Endothelial cell of umbilical vein (primary cell): ENCODE measurements at regions of chr10 and their contacts with region 1.

Region 1: DNA sequence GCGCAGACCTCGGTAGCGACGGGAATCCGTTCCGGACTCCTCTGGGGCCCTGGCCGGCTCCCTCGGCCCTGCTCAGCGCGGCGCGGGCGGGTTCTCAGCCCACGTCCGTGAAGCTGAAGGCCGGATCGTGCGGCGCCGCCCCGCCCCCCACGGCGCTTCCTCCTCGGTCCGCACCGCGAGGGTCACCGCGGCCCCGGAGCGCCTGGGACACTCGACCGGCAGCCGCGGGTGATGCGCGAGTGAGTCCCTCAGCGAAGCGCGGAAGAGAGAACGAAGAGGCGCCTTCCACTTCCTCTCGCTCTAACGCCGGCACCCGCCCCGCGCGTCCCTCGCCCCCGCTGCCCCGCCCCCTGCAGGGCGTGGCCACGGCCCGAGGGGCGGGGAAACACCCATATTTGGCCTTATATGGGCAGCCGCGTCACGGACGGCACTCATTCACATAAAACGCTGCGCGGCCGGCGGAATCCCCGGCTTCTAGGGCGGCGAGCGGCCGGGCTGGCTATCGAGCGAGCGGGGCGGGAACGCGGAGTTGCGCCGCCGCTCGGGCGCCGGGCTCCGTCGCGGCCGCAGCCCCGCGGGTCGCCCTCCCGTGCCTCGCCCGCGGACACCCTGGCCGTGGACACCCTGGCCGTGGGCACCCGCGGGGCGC is at the start of gene DUSP5:
- DNase-seq: peak; percentile 96
- H3K4me3 ChIP-seq: peak within 1 kb of the TSS; percentile 58 to 81 (median 77)
- H3K27ac ChIP-seq: peak within 1 kb of the TSS; percentile 94
- H3K4me1 ChIP-seq: peaks cover 48% of the 10 kb centered on the region
- H3K27me3 ChIP-seq: no peaks in the 10 kb centered on the region
- CTCF ChIP-seq: no peak
- POLR2A ChIP-seq: peak; percentile 93
- total RNA-seq, gene DUSP5: 12.2 and 12.6 TPM in 2 replicates

Region 2: DNA sequence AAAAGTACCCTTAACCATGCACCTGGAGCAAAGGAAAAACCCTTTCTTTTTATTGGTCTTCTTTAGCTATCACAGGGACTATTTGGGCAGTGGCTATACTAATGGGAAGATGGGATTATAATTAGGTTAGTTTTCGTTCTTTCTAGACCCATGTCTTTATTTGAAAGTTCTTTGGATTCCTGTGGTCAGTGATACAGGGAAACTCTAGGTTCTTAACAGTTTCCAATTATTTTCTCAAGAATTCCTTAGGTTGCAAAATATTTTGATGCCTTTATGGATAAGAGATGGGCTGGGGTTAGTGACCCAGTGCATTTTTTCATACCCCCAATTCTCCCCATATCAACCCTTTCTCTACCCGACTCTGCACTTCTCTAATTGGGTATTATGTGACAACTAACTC is 440.7 kb before region 1 on chr10:
- CTCF ChIA-PET with region 1: no interaction called
- POLR2A ChIA-PET with region 1: no interaction called
- dilution Hi-C with region 1: no loop called
- intact Hi-C with region 1: no loop called
- DNase-seq: no peak
- H3K4me3 ChIP-seq: no peak overlapping the region
- H3K27ac ChIP-seq: no peak overlapping the region
- H3K4me1 ChIP-seq: peaks cover 14% of the 10 kb centered on the region
- H3K27me3 ChIP-seq: no peaks in the 10 kb centered on the region
- CTCF ChIP-seq: no peak
- POLR2A ChIP-seq: no peak

Region 3: GRCh38 chr10:110311357-110311949 is 186.1 kb before region 1 on chr10:
- CTCF ChIA-PET with region 1: interaction called, 32 read pairs
- POLR2A ChIA-PET with region 1: interaction called, 5 read pairs
- dilution Hi-C with region 1: no loop called
- intact Hi-C with region 1: loop called (anchors 1 kb)
- DNase-seq: peak; percentile 65
- H3K4me3 ChIP-seq: peak overlapping the region in 1 of 3 experiments; percentile 33
- H3K27ac ChIP-seq: peak overlapping the region; percentile 72
- H3K4me1 ChIP-seq: peaks cover 47% of the 10 kb centered on the region
- H3K27me3 ChIP-seq: no peaks in the 10 kb centered on the region
- CTCF ChIP-seq: peak; percentile 54 to 55
- POLR2A ChIP-seq: no peak

Region 4: DNA sequence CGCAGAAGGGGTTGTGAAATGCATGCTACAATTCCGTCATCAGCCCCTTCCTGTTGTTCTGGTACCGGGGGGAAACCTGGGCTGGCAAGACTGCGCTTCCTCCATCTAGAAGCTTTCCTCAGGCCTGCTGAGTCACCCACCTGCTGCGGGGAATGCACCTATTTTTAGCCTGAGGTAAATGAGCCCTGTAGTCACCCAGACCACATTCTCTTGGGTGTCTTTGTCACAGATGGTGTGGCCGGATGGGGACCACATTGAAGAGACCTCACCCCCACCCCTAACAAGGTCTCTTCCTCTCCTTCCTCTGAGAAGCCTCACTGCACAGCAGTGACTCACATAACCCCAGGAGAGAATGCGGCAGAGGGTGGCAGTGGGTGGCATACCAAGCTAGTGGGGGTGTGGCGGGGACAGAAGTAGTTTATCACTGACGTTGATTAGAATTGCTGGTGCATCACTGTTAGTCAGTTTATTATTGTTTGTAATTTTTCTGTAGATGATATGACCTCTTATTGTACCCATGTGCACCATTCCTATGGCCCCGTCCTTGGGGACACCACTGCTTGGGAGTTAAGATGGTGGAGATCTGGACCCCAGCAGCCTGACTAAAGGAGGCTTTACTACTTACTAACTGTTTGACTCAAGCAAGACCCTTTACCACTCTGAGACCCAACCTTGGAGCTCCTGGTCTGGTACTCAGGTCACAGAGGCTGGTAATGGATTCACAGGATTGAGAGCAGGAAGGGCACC is 82.8 kb before region 1 on chr10:
- CTCF ChIA-PET with region 1: interaction called, 6 read pairs
- POLR2A ChIA-PET with region 1: interaction called, 4 read pairs
- dilution Hi-C with region 1: no loop called
- intact Hi-C with region 1: loop called (anchors 5 kb)
- DNase-seq: no peak
- H3K4me3 ChIP-seq: no peak overlapping the region
- H3K27ac ChIP-seq: peak overlapping the region; percentile 8
- H3K4me1 ChIP-seq: peaks cover 39% of the 10 kb centered on the region
- H3K27me3 ChIP-seq: no peaks in the 10 kb centered on the region
- CTCF ChIP-seq: no peak
- POLR2A ChIP-seq: no peak

Region 5: DNA sequence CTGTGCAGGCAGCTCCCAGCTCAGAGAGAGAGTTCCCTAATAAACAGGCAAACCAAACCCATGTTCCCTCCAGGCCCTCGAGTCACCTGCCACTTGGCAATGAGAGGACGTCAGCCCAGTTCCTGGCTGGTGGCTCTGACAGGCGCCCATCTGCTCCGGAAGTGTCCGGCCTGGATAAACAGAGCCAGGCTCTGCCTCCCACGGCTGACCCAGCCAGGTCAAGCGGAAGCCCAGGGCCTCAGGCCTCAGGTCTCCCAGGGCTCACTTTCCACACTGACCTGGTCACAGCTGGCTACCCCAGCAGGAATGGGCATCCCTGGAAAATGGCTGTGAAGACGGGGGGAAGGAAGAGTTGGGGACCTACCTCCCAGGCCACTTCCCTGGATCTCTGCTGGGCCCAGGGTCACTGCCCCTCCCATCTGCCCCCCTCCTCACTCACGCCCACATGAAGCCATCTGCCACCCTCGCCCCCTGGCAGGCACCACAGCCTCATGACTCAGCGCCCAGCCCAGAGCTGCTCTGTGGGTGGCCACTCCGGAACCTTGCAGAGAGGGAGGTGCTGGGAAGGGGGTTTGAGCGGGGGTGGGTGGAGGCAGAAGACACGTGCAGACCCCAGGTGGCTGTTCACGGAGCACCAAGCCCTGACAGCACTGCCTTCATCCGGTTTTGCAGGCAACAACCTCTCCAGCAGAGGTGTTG is 37.3 kb before region 1 on chr10:
- CTCF ChIA-PET with region 1: interaction called, 3 read pairs
- POLR2A ChIA-PET with region 1: no interaction called
- dilution Hi-C with region 1: no loop called
- intact Hi-C with region 1: loop called (anchors 2 kb)
- DNase-seq: peak; percentile 55
- H3K4me3 ChIP-seq: no peak overlapping the region
- H3K27ac ChIP-seq: peak overlapping the region; percentile 66
- H3K4me1 ChIP-seq: peaks cover 29% of the 10 kb centered on the region
- H3K27me3 ChIP-seq: no peaks in the 10 kb centered on the region
- CTCF ChIP-seq: no peak
- POLR2A ChIP-seq: no peak

Region 6: GRCh38 chr10:110481934-110482333 is 15.6 kb before region 1 on chr10:
- CTCF ChIA-PET with region 1: no interaction called
- POLR2A ChIA-PET with region 1: no interaction called
- dilution Hi-C with region 1: no loop called
- intact Hi-C with region 1: no loop called
- DNase-seq: no peak
- H3K4me3 ChIP-seq: no peak overlapping the region
- H3K27ac ChIP-seq: no peak overlapping the region
- H3K4me1 ChIP-seq: peaks cover 6% of the 10 kb centered on the region
- H3K27me3 ChIP-seq: no peaks in the 10 kb centered on the region
- CTCF ChIP-seq: no peak
- POLR2A ChIP-seq: no peak

Region 7: GRCh38 chr10:110528224-110528997 is 30.8 kb after region 1 on chr10:
- CTCF ChIA-PET with region 1: interaction called, 6 read pairs
- POLR2A ChIA-PET with region 1: no interaction called
- dilution Hi-C with region 1: no loop called
- intact Hi-C with region 1: loop called (anchors 1 kb)
- DNase-seq: no peak
- H3K4me3 ChIP-seq: no peak overlapping the region
- H3K27ac ChIP-seq: peak overlapping the region; percentile 90
- H3K4me1 ChIP-seq: peaks cover 55% of the 10 kb centered on the region
- H3K27me3 ChIP-seq: no peaks in the 10 kb centered on the region
- CTCF ChIP-seq: no peak
- POLR2A ChIP-seq: no peak

Region 8: GRCh38 chr10:110794808-110795207 is 297.2 kb after region 1 on chr10:
- CTCF ChIA-PET with region 1: no interaction called
- POLR2A ChIA-PET with region 1: no interaction called
- dilution Hi-C with region 1: no loop called
- intact Hi-C with region 1: no loop called
- DNase-seq: no peak
- H3K4me3 ChIP-seq: no peak overlapping the region
- H3K27ac ChIP-seq: no peak overlapping the region
- H3K4me1 ChIP-seq: no peaks in the 10 kb centered on the region
- H3K27me3 ChIP-seq: peaks cover 12 to 14% of the 10 kb centered on the region in 2 experiments
- CTCF ChIP-seq: no peak
- POLR2A ChIP-seq: no peak

Region 9: DNA sequence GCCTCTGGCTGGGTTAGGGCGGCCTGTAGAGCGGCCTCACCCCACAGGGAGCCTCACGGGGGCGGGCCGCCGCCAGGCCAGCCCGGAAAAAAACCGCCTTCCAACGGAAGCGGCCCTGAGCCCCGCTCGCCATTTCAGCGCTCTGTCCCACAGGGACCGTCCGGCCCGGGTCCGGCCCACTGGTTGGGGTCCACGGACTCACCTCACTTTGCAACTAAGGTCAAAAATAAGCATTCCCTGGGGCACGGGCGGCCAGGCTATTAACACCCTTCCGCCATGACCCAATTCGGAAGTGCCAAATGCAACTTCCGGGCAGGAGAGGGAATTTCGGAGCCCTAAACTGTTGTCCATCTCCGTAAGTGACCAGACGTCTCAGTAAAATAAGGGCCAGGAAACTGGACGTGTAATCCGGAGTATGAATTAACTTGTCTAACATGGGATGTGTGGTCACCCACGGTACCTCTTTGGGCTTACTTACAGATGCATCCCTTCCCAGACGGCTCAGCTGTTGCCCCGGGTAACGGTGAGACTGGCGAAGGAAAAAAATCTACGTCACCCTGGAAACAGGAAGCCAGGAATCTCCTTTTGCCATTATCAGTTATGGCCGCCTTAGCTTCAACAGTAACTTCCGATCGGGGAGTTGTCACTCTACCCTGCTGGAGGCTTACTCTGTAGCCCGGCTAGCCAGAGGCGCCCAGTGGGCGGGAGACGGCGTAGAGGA is 421.2 kb after region 1 on chr10 and contains the start of gene BBIP1:
- CTCF ChIA-PET with region 1: interaction called, 3 read pairs
- POLR2A ChIA-PET with region 1: no interaction called
- dilution Hi-C with region 1: no loop called
- intact Hi-C with region 1: loop called (anchors 5 kb)
- DNase-seq: peak; percentile 100
- H3K4me3 ChIP-seq: peak within 1 kb of the TSS; percentile 89 to 94 (median 93)
- H3K27ac ChIP-seq: peak within 1 kb of the TSS; percentile 98
- H3K4me1 ChIP-seq: peaks cover 20% of the 10 kb centered on the region
- H3K27me3 ChIP-seq: no peaks in the 10 kb centered on the region
- CTCF ChIP-seq: no peak
- POLR2A ChIP-seq: peak; percentile 91
- total RNA-seq, gene BBIP1: 32.8 and 34.9 TPM in 2 replicates